Esophagus muscularis mucosa (tissue), 4 donors: ENCODE measurements at regions of chr2 and their contacts with region 1.

Region 1: DNA sequence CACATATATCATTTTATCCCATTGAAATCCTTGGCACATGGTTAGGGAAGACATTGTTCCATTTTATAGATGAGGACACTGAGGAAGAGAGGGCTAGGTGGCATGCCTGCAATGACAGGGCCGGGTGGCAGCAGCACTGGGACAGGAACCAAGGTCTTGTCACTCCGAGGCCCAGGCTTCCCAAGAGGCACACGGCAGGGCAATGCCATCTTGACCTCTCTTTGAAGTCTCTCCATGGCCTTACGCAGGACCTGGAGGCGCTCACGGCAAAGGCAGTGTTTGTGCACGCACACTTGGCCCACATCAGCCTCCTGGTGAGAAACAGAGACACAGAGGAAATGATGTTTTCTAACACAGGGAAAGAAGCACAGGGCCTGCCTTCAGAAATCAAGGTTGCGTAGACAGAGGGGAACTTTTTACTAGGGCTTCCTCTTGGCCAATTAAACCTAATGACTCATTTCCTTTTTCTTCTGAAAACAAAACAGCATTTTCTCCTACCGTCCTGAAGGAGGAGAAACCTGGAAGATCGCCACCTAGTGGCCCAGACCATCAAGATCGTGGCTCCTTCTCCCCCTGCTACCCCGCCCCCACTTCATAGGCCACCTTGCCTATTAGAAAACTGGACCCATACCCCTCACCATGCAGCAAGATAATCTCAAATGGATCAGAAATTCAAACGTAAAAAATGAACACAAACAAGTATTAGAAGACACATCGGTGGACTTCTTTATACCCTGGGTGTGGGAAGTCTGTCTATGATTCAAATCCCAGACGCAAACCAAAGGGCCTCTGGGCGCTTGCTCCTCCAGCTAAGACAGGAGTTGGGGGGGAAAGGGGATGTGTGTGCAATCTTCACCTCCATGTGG is 74.6 kb upstream of the SP3 start:
- DNase-seq: peak; percentile 95
- H3K4me3 ChIP-seq: peak overlapping the region; percentile 20 to 37 (median 33)
- H3K27ac ChIP-seq: peak overlapping the region; percentile 65 to 78 (median 75)
- H3K4me1 ChIP-seq: peaks cover 6 to 24% (median 12%) of the 10 kb centered on the region in 4 donors
- H3K27me3 ChIP-seq: no peaks in the 10 kb centered on the region
- CTCF ChIP-seq: peak; percentile 81 to 84 (median 83)
- EP300 ChIP-seq: no peak
- POLR2A ChIP-seq: no peak

Region 2: DNA sequence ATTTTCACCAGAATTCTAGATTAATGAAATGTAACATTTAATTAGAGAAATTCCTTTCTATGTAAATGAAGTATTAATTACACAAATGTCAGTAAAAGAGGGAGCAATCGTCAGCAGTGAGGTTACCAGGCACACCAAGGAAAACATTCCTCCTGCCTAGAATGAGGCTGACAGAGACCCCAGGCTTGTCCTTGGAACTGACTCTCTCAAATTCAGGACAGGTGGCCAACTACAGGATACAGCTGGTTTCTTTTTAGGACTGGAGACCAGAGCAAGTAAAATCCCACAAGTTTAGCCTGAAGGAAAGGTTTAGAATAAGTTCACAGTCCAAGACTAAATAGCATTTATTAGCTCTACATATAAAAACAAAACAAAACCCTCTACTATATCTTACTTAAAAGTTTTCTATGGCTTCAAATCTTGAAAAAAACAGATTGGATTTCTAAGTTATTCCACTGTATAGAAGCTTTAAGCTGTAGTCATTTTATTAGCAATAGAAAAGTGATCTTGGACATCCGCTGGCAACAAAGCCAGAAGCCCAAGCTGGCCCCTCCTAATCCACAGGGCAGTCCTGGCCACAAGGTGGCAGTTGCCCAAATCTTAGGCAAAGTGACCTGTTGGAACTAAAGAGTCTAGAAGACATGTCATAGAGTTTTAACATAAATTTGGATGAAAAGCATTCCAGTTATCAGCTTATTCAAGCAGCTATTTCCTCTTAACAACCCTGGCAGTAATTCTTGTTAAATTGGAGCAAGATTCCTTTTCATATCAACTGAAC is 155.6 kb before region 1 on chr2:
- intact Hi-C with region 1: loop called (anchors 2 kb)
- DNase-seq: no peak
- H3K4me3 ChIP-seq: no peak overlapping the region
- H3K27ac ChIP-seq: no peak overlapping the region
- H3K4me1 ChIP-seq: peaks cover 0 to 6% (median 0%) of the 10 kb centered on the region in 4 donors
- H3K27me3 ChIP-seq: peaks cover 0 to 3% (median 0%) of the 10 kb centered on the region in 4 donors
- CTCF ChIP-seq: peak; percentile 60 to 72 (median 65)
- EP300 ChIP-seq: no peak
- POLR2A ChIP-seq: no peak